Posterior cingulate gyrus (tissue), 11 donors: ENCODE measurements at regions of chr21 and their contacts with region 1.

Region 1: GRCh38 chr21:20971296-20971921 is 26.8 kb upstream of the NCAM2 start:
- DNase-seq: peak in 9 of 10 donors; percentile 40 to 95 (median 77)

Region 2: DNA sequence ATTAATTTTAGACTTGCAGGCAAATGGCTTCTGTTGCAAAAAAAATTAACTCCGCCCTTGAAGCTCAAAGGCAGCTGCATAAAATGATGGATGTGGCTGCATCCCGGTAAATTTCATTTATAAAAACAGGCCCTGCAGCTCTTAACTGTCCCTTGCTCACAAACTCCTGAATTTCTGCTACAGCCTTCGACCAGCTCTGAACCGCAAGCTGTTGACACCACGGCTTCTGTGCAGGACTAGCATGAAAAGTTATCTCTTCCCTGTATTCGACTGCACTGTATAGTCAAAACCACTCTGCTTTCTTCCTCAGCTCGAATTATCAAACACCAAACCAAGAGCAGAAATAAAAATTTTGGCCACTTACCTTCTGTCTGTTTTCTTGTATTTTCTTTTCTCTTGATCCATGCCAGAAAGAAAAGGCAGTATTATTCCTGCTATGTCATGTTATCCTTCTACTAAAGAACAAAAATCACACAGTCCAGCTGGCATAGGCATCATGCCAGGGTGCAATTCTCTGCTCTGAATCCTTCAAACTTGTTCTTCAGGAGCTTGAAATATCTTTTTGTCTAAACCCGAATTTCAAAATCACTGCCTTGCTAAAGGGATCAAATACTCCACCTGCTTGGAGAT is 168.7 kb before region 1 on chr21:
- intact Hi-C with region 1: loop called (anchors 10 kb)
- DNase-seq: peak in 9 of 10 donors; percentile 14 to 86 (median 57)

Region 3: GRCh38 chr21:20902511-20902910 is 68.9 kb before region 1 on chr21:
- intact Hi-C with region 1: loop called (anchors 10 kb)
- DNase-seq: no peak